Activated CD8-positive, alpha-beta T cell treated with anti-CD3 and anti-CD28 coated beads for 36 hours (primary cell): ENCODE measurements at regions of chr17 and their contacts with region 1.

Region 1: GRCh38 chr17:60577147-60577915 is 22.7 kb upstream of the PPM1D start:
- DNase-seq: no peak
- ATAC-seq: no peak
- H3K4me3 Mint-ChIP-seq: peak overlapping the region; percentile 60
- H3K27ac Mint-ChIP-seq: peak overlapping the region; percentile 25
- H3K4me1 Mint-ChIP-seq: peaks cover 6% of the 10 kb centered on the region
- H3K27me3 Mint-ChIP-seq: peaks cover 3% of the 10 kb centered on the region
- CTCF ChIP-seq: no peak

Region 2: DNA sequence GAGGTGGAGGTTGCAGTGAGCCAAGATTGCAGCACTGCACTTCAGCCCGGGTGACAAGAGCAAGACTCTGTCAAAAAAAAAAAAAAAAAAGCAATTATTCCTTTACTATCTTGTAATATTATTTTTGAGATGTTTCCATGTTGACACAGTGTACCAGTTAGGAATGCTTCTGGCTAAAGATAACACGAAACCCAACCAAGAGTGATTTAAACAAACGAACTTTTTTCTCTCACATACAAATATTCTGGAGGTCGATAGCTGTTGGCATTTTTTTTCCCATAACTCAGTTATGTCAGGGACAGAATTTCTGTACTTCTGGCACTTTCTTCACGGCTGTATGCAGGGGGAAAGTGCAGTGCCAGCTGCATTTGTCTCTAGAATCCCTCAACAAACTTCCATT is 12.7 kb after region 1 on chr17:
- CTCF ChIA-PET with region 1: interaction called, 10 read pairs
- POLR2A ChIA-PET with region 1: interaction called, 3 read pairs
- intact Hi-C with region 1: no loop called
- DNase-seq: no peak
- ATAC-seq: no peak
- H3K4me3 Mint-ChIP-seq: no peak overlapping the region
- H3K27ac Mint-ChIP-seq: no peak overlapping the region
- H3K4me1 Mint-ChIP-seq: no peaks in the 10 kb centered on the region
- H3K27me3 Mint-ChIP-seq: peaks cover 1% of the 10 kb centered on the region
- CTCF ChIP-seq: no peak